Activated B cell treated with CpG ODN at 0.5 μM for 24 hours (primary cell): ENCODE measurements at regions of chr1 and their contacts with region 1.

Region 1: DNA sequence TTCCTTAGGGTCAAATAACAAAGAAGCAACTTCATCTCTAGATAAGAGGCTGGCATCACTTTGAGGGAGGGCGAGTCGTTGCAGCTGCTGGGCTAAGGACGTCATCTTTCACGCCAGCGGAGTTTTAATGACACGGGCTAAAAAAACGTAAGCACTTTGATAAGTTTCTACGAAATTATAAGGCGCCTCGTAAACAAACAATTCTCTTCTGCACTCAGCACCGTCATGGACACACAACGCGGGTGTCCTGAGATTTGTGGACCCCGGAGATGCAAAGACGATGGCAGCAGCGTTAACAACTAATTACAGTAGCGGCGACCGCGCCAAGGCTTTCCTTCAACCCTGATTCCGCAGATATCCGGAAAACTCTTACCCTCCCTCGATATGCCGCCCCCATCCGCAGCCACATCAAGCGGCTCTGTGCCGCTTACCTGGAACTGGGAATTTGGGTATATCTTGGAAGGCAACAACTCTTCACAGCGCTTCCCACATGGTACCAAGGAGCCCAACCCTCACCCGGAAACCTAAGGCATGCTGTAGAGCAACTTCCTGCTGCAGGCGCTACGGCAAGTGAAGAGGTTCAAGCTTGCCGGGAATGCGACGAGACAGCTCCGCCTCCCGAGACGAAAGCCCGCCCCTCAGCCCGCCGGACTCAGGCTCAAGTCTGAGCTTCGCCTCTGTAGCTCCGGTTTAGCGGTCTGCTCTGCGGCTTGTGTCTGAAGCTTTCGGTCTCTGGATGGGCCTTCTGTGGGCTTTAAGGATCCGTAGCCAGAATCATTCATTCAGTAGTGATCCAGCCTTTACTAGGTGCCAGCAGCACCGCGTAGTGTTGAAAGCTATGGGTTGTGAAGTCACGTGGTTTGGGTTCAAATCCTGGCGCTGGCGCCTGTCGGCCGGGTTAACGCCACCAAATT is at the start of gene HEATR1:
- DNase-seq: peak; percentile 85
- ATAC-seq: peak; percentile 95
- H3K4me3 Mint-ChIP-seq: peak within 1 kb of the TSS; percentile 98
- H3K27ac Mint-ChIP-seq: peak within 1 kb of the TSS; percentile 89
- H3K4me1 Mint-ChIP-seq: peaks cover 26% of the 10 kb centered on the region
- H3K27me3 Mint-ChIP-seq: peaks cover 7% of the 10 kb centered on the region
- CTCF ChIP-seq: no peak
- total RNA-seq, gene HEATR1: 69.3 and 78.5 TPM in 2 replicates

Region 2: DNA sequence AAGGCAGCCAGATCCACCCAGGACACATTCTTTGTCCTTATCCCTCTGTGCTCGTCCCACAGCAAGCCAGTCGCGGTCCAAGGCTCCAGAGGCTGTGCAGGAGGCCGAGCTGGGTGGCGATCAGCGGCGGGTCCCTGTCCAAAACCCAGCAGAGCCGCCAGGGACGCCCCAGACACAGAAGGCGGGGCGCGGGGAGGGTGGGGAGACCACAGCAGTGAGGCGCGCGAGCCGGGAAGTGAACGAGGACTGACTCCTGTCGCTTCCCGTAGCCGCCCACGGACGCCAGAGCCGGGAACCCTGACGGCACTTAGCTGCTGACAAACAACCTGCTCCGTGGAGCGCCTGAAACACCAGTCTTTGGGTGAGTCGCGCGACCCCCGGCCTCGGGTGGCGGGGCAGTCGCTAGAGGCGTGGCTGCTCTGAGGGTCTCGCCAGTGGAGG is 80.5 kb before region 1 on chr1 and contains the start of gene LGALS8:
- CTCF ChIA-PET with region 1: no interaction called
- POLR2A ChIA-PET with region 1: interaction called, 8 read pairs
- intact Hi-C with region 1: loop called (anchors 1 kb)
- DNase-seq: peak; percentile 69
- ATAC-seq: peak; percentile 60
- H3K4me3 Mint-ChIP-seq: peak within 1 kb of the TSS; percentile 95
- H3K27ac Mint-ChIP-seq: peak within 1 kb of the TSS; percentile 90
- H3K4me1 Mint-ChIP-seq: peaks cover 12% of the 10 kb centered on the region
- H3K27me3 Mint-ChIP-seq: no peaks in the 10 kb centered on the region
- CTCF ChIP-seq: no peak
- total RNA-seq, gene LGALS8: 36.0 and 37.4 TPM in 2 replicates

Region 3: DNA sequence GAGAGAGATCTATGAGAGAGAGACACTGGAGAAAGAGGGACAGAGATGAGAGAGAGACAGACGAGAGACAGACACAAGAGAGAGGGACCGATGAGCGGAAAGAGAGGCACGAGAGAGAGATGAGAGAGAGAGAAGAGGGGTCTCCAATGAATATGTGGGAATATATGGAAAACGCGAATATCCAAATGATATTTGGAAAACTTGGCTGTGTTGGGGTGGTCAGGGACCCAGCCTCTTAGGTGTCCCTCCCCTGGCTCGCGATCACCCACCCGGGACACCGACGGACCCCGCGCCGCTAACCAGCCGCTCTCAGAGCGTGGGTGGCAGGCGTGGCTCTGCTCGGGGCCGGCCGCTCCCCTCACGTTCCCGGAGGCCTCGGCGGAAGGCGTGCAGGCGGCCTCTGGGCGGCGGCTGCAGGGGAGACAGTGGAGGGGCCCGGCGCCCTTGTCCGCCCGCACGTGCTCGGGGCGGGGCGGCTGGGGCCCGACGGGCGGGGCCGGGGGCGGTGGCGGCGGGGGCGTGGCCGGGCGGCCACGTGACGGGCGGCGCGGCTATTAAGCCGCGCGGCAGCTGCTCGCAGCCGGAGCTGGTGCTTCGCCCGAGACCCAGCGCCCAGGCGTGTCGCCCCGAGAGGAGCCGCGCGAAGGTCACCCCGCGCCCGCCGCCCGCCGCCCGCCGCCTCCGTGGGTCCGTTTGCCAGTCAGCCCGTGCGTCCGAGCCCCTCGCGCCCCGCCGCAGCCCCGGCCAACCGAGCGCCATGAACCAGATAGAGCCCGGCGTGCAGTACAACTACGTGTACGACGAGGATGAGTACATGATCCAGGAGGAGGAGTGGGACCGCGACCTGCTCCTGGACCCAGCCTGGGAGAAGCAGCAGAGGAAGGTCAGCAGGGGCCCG is 81.9 kb after region 1 on chr1 and contains the start of gene ACTN2:
- CTCF ChIA-PET with region 1: no interaction called
- POLR2A ChIA-PET with region 1: no interaction called
- intact Hi-C with region 1: loop called (anchors 1 kb)
- DNase-seq: peak; percentile 41
- ATAC-seq: peak; percentile 87
- H3K4me3 Mint-ChIP-seq: peak within 1 kb of the TSS; percentile 66
- H3K27ac Mint-ChIP-seq: no peak within 1 kb of the TSS
- H3K4me1 Mint-ChIP-seq: peaks cover 19% of the 10 kb centered on the region
- H3K27me3 Mint-ChIP-seq: peaks cover 49% of the 10 kb centered on the region
- CTCF ChIP-seq: no peak
- total RNA-seq, gene ACTN2: not detected in 2 replicates

Region 4: DNA sequence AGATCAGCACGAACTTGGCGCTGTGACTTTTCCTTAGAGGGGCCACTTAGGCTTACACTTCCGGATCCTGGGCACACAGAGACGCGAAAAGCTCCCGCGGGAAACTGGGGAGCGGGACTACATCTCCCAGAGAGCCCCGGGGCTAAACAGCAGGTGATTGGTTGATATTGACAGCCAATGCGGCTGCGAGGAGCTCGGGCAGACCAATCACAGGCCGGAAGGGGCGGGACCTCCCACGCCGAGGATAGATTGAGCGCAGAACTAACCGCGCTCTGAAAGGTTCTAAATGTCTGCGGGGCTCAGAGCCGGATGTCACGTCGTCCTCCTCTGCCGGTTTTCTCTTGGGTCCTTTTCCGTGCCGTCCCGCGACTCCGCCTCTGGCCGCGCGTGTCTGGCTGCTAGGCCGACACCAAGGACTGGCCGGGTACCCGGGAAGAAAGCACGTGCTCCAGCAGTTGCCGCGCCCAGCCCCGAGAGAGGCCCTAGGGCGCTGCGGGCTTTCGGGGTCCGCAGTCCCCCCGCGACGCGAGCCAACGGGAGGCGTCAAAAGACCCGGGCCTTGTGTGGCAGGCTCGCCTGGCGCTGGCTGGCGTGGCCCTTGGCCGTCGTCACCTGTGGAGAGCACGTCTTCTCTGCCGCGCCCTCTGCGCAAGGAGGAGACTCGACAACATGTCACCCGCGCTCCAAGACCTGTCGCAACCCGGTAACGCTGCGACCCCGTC is 190.9 kb after region 1 on chr1 and contains the start of gene MTR:
- CTCF ChIA-PET with region 1: interaction called, 4 read pairs
- POLR2A ChIA-PET with region 1: interaction called, 7 read pairs
- intact Hi-C with region 1: loop called (anchors 1 kb)
- DNase-seq: peak; percentile 91
- ATAC-seq: peak; percentile 94
- H3K4me3 Mint-ChIP-seq: peak within 1 kb of the TSS; percentile 97
- H3K27ac Mint-ChIP-seq: peak within 1 kb of the TSS; percentile 98
- H3K4me1 Mint-ChIP-seq: peaks cover 41% of the 10 kb centered on the region
- H3K27me3 Mint-ChIP-seq: peaks cover 2% of the 10 kb centered on the region
- CTCF ChIP-seq: no peak
- total RNA-seq, gene MTR: 31.2 and 37.1 TPM in 2 replicates

Region 5: DNA sequence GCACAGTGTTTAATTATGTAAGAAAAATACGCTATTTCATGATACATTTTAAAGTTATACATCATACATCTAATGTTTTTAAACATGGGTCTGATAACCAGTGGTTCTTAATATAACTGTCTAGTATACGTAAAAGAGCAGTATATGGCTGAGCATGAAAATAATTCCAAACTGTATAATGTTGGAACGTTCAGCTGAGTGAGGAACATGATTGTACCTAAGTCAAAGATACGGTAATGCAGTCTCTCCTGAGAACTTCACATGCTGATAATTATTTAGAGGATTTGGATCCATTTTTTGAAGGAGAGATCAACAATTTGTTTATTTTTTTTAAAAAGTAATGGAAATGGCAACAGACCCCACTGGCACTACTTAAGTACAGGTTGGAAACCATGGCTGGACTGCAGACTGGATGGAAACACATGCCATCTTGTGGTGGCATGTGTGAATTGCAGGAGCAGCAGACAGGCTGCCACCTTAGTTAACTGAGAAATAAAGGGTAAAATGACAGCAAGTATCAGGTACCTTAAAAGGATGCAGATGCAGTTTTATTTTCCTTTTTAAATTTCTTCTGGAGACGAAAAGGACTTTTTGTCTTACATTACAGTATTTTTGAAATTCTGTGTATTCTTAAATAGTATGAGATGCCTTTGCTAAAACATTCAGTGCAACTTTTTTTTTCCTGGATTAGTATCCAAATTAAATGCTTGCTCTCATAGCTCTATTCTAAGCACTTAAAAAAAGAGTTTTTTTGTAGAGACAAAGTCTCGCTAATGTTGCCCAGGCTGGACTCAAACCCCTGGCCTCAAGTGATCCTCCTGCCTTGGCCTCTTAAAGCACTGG is 264.6 kb after region 1 on chr1:
- CTCF ChIA-PET with region 1: no interaction called
- POLR2A ChIA-PET with region 1: no interaction called
- intact Hi-C with region 1: loop called (anchors 2 kb)
- DNase-seq: no peak
- ATAC-seq: peak; percentile 31
- H3K4me3 Mint-ChIP-seq: no peak overlapping the region
- H3K27ac Mint-ChIP-seq: no peak overlapping the region
- H3K4me1 Mint-ChIP-seq: no peaks in the 10 kb centered on the region
- H3K27me3 Mint-ChIP-seq: no peaks in the 10 kb centered on the region
- CTCF ChIP-seq: peak; percentile 84

Region 6: DNA sequence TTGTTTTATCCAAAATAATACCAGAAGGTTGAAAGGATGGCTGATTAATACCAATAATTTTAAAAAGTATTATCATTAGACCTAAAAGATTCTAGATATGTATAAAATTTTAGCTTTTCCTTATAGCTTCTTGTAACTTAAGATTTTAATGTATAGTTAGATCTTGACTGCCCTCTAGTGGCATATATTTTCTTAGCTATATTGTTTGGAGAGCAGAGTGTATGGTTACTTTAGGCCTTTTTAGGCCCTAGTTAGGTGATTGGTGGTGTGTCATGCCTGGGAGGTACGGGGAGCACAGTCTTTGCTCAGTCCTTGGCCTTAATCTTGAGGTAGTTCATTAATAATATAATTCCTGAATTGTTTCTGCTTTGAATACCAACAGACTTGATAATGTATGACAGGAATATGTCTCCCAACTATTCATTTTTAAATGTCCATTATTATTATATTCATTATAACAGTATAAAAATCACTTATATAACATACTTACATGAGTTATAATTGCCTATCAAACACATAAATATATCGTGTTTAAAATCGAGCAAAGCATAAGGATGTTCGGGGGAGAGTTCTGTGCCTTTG is 958.1 kb after region 1 on chr1:
- CTCF ChIA-PET with region 1: interaction called, 3 read pairs
- POLR2A ChIA-PET with region 1: no interaction called
- intact Hi-C with region 1: loop called (anchors 5 kb)
- DNase-seq: no peak
- ATAC-seq: no peak
- H3K4me3 Mint-ChIP-seq: no peak overlapping the region
- H3K27ac Mint-ChIP-seq: no peak overlapping the region
- H3K4me1 Mint-ChIP-seq: no peaks in the 10 kb centered on the region
- H3K27me3 Mint-ChIP-seq: no peaks in the 10 kb centered on the region
- CTCF ChIP-seq: peak; percentile 63